ENCODE measurements at regions of chr14 and their contacts with region 1.

Region 1: GRCh38 chr14:35121887-35122695 is at the starts of genes PPP2R3C and PRORP:
- DNase-seq: peak; percentile 78 to 96 (median 88)
- ATAC-seq: peak; percentile 83
- H3K4me3 ChIP-seq: peak within 1 kb of the TSS; percentile 71 to 90
- H3K4me3 Mint-ChIP-seq: peak within 1 kb of the TSS; percentile 99
- H3K27ac ChIP-seq: peak within 1 kb of the TSS; percentile 96 to 97
- H3K27ac Mint-ChIP-seq: peak within 1 kb of the TSS; percentile 100
- H3K4me1 ChIP-seq: peaks cover 33% of the 10 kb centered on the region
- H3K4me1 Mint-ChIP-seq: peaks cover 66% of the 10 kb centered on the region
- H3K27me3 ChIP-seq: no peaks in the 10 kb centered on the region
- H3K27me3 Mint-ChIP-seq: no peaks in the 10 kb centered on the region
- CTCF ChIP-seq: no peak
- total RNA-seq, gene PPP2R3C: 44.2 to 51.4 TPM
- total RNA-seq, gene PRORP: 16.5 to 21.9 TPM

Region 2: GRCh38 chr14:34539407-34540180 is 582.5 kb before region 1 on chr14 and contains the start of gene EAPP:
- CTCF ChIA-PET with region 1: no interaction called
- POLR2A ChIA-PET with region 1: no interaction called
- intact Hi-C with region 1: loop called (anchors 5 kb)
- DNase-seq: peak; percentile 88 to 97 (median 95)
- ATAC-seq: peak; percentile 98
- H3K4me3 ChIP-seq: peak within 1 kb of the TSS; percentile 94 to 95
- H3K4me3 Mint-ChIP-seq: peak within 1 kb of the TSS; percentile 97
- H3K27ac ChIP-seq: peak within 1 kb of the TSS; percentile 96 to 97
- H3K27ac Mint-ChIP-seq: peak within 1 kb of the TSS; percentile 98
- H3K4me1 ChIP-seq: peaks cover 16% of the 10 kb centered on the region
- H3K4me1 Mint-ChIP-seq: peaks cover 34% of the 10 kb centered on the region
- H3K27me3 ChIP-seq: no peaks in the 10 kb centered on the region
- H3K27me3 Mint-ChIP-seq: no peaks in the 10 kb centered on the region
- CTCF ChIP-seq: no peak
- total RNA-seq, gene EAPP: 91.0 to 91.4 TPM

Region 3: DNA sequence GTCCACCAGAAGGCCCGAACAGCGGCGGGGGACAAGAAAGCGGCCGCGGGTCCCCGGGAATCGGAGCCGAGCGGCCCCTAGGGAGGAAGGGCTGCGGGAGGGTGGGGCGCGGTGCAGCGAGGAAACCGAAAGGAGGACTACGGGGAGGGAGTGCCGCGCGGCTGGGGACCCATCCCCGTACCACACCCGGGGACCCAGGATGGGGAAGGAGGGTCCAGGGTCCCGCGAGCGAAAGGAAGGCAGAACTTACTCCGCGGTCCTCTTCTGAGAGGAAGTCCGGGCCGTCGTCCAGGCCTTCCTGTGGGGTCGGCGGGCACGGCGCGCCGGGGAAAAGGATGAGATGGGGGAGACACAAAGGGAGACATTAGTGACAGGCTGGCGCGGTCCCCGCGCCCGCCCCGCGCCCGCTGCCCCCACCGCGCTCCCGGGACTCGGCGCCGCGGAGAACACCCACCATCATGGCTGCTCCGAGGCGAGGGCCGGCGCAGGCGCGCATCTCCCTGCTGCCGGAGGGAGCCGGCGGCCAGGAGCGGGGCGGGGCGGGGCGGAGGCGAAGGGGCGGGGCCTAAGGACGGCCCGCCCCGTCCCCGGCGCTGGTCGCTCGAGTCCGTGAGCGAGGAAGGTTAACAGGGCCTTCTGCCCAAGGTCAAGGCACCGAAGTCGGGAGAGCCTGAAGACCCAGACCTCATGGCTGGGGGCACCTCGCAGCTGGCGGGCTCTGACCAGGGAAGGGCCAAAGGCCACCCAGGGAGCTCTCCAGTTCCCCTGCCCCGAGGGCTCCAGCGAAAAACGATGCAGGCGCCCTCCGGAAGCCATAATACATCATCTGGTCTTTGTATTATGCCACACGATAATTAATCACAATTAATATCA is 492.2 kb before region 1 on chr14 and contains the start of gene SNX6:
- CTCF ChIA-PET with region 1: no interaction called
- POLR2A ChIA-PET with region 1: interaction called, 5 read pairs
- intact Hi-C with region 1: loop called in 1 of 2 experiments (anchors 5 kb)
- DNase-seq: peak; percentile 70 to 92 (median 83)
- ATAC-seq: peak; percentile 96
- H3K4me3 ChIP-seq: peak within 1 kb of the TSS; percentile 95 to 100
- H3K4me3 Mint-ChIP-seq: peak within 1 kb of the TSS; percentile 94
- H3K27ac ChIP-seq: peak within 1 kb of the TSS; percentile 91 to 96
- H3K27ac Mint-ChIP-seq: peak within 1 kb of the TSS; percentile 93
- H3K4me1 ChIP-seq: peaks cover 20% of the 10 kb centered on the region
- H3K4me1 Mint-ChIP-seq: peaks cover 37% of the 10 kb centered on the region
- H3K27me3 ChIP-seq: no peaks in the 10 kb centered on the region
- H3K27me3 Mint-ChIP-seq: peaks cover 4% of the 10 kb centered on the region
- CTCF ChIP-seq: no peak
- total RNA-seq, gene SNX6: 51.2 to 53.5 TPM

Region 4: DNA sequence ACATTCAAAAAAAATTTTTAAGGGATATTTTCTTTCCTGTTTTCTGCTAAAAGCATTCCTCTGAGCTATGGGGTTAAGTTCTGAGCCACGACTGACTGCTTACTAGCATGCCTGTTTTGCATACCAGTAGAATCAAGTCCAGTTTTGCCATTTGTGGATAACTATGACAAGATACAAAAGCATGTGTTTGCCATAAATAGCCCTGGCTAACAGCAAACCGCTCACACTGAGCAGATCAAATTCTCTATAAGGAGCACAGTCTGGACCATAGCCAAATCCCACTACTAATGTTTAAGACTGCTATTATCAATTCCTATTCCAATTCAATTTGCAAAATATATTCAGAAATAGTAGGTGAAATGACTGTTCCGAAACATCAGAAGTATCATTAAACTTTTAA is 410.9 kb before region 1 on chr14:
- CTCF ChIA-PET with region 1: no interaction called
- POLR2A ChIA-PET with region 1: no interaction called
- intact Hi-C with region 1: no loop called
- DNase-seq: no peak
- ATAC-seq: no peak
- H3K4me3 ChIP-seq: no peak overlapping the region
- H3K4me3 Mint-ChIP-seq: no peak overlapping the region
- H3K27ac ChIP-seq: no peak overlapping the region
- H3K27ac Mint-ChIP-seq: no peak overlapping the region
- H3K4me1 ChIP-seq: peaks cover 13% of the 10 kb centered on the region
- H3K4me1 Mint-ChIP-seq: peaks cover 32% of the 10 kb centered on the region
- H3K27me3 ChIP-seq: no peaks in the 10 kb centered on the region
- H3K27me3 Mint-ChIP-seq: no peaks in the 10 kb centered on the region
- CTCF ChIP-seq: no peak

Region 5: DNA sequence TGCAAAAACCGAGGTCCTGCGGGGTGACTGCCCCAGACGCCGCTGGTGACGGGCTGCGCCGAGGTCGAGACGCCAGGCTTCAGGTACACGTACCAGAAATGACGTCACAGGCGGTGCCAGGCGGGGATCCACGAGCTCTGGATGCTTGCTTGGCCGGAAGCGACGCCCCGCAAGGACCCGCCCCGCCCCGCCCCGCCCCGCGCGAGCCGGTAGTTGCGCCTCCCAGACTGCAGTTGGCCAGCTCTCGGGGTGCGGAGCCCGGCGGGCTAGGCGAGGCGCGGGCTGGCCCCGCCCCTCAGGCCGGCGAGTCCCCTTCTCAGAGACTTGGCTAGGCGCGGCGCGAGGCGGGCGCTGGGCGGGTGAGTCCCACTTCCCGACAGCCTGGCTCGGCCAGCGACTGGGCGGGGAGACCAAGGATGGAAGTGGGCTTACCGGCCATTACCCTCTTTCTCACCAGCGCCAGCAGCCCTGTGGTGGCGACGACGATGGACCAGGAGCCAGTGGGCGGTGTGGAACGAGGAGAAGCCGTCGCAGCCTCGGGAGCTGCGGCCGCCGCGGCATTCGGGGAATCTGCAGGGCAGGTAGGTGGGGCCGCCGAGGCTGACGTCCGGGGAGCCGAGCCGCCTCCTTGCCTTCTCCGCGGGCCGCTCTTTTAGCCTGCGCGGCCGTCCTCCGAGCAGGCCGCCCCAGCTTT is 75.9 kb before region 1 on chr14 and contains the start of gene FAM177A1:
- CTCF ChIA-PET with region 1: no interaction called
- POLR2A ChIA-PET with region 1: interaction called, 32 read pairs
- intact Hi-C with region 1: loop called (anchors 1 kb)
- DNase-seq: peak; percentile 97 to 100 (median 99)
- ATAC-seq: peak; percentile 83
- H3K4me3 ChIP-seq: peak within 1 kb of the TSS; percentile 81 to 96
- H3K4me3 Mint-ChIP-seq: peak within 1 kb of the TSS; percentile 82
- H3K27ac ChIP-seq: peak within 1 kb of the TSS; percentile 96 to 100
- H3K27ac Mint-ChIP-seq: peak within 1 kb of the TSS; percentile 98
- H3K4me1 ChIP-seq: peaks cover 20% of the 10 kb centered on the region
- H3K4me1 Mint-ChIP-seq: peaks cover 28% of the 10 kb centered on the region
- H3K27me3 ChIP-seq: no peaks in the 10 kb centered on the region
- H3K27me3 Mint-ChIP-seq: no peaks in the 10 kb centered on the region
- CTCF ChIP-seq: no peak
- total RNA-seq, gene FAM177A1: 227 to 230 TPM

Region 6: DNA sequence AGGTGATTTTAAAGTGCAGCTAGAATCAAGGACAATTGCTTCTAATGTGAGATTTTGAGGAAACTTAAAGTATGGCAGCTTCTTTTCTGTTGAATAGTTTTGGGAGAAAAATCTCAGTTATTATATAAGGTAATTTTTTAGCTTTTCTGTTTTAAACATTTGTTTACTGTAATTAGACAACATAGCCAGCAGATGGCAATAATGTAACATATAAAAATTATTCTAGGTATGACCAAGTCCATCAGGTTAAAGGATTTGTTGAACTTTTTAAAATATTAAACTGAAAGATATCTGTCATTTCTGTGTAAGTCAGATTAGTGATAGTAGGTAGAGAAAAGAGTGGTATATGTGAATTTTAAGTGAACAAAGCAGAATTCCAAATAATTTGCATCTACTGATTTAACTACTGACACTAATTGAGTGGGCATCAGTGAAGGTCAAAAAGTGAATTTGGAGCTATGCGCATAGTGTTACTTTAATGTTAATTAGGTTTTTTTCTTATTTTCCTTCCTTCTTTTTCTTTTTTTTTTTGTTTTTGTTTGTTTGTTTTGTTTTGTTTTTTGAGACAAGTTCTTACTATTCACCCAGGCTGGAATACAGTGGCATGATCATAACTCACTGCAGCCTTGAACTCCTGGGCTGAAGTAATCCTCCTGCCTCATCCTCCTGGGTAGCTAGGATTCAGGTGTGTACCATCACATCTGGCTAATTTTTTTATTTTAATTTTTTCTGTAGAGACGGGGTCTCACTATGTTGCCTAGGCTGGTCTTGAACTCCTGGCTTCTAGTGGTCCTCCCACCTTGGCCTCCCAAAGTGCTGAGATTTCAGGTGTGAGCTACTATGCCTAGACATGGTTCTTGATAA is 18.9 kb after region 1 on chr14:
- CTCF ChIA-PET with region 1: interaction called, 18 read pairs
- POLR2A ChIA-PET with region 1: interaction called, 3 read pairs
- intact Hi-C with region 1: loop called in 1 of 2 experiments (anchors 1 kb)
- DNase-seq: peak in 2 of 9 experiments; percentile 40 to 44
- ATAC-seq: peak; percentile 67
- H3K4me3 ChIP-seq: no peak overlapping the region
- H3K4me3 Mint-ChIP-seq: no peak overlapping the region
- H3K27ac ChIP-seq: no peak overlapping the region
- H3K27ac Mint-ChIP-seq: peak overlapping the region; percentile 67
- H3K4me1 ChIP-seq: no peaks in the 10 kb centered on the region
- H3K4me1 Mint-ChIP-seq: peaks cover 19% of the 10 kb centered on the region
- H3K27me3 ChIP-seq: no peaks in the 10 kb centered on the region
- H3K27me3 Mint-ChIP-seq: no peaks in the 10 kb centered on the region
- CTCF ChIP-seq: peak; percentile 83

Region 7: DNA sequence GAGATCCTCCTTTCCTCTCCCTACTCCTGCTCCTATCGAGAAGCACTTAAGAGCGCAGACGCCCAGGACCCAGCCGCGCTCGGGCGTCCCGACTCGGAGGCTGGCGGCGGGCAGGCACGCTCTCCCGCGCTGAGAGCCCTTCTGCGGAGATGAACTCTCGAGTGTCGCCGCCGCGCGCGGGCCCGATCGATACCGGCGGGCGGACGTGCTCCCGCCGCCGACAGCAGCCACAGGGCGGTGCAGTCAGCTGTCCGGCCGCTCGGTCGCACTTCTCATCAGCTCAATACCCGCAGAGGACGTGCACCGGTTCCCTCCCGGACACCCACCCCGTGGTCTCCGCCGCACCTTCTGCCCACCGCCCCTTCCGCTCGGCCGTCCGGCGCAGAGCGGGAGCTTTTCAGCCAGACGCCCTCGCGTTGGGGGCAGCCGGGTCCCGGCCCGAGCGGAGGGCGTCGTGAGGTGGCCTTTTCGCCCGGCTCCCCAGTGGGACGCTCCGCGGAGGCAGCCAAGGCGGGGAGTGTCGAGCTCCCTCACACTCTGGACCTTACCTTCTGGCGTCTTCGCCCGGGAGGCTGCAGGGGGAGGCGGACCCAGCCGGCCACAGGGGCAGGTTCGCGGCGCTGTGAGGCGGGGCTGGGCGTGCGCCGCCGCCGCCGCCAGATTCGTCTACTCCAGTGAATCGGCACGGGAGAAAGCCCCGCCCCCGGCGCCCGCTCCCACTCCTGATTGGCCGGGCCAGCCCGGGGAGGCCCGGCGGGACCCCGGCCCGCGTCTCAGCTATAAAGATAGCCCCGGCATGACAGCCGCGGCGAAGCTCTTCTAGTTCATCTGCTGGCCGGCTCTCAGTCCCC is 411.5 kb after region 1 on chr14 and contains the start of gene INSM2:
- CTCF ChIA-PET with region 1: no interaction called
- POLR2A ChIA-PET with region 1: no interaction called
- intact Hi-C with region 1: loop called (anchors 10 kb)
- DNase-seq: peak in 7 of 9 experiments; percentile 31 to 54 (median 51)
- ATAC-seq: peak; percentile 39
- H3K4me3 ChIP-seq: peak within 1 kb of the TSS; percentile 53 to 54
- H3K4me3 Mint-ChIP-seq: peak within 1 kb of the TSS; percentile 81
- H3K27ac ChIP-seq: no peak within 1 kb of the TSS
- H3K27ac Mint-ChIP-seq: no peak within 1 kb of the TSS
- H3K4me1 ChIP-seq: peaks cover 19% of the 10 kb centered on the region
- H3K4me1 Mint-ChIP-seq: peaks cover 16% of the 10 kb centered on the region
- H3K27me3 ChIP-seq: peaks cover 16 to 35% of the 10 kb centered on the region in 2 experiments
- H3K27me3 Mint-ChIP-seq: peaks cover 41% of the 10 kb centered on the region
- CTCF ChIP-seq: no peak
- total RNA-seq, gene INSM2: not detected

Region 8: GRCh38 chr14:35814371-35815005 is 692.4 kb after region 1 on chr14:
- CTCF ChIA-PET with region 1: no interaction called
- POLR2A ChIA-PET with region 1: no interaction called
- intact Hi-C with region 1: loop called in 1 of 2 experiments (anchors 5 kb)
- DNase-seq: peak; percentile 56 to 92 (median 83)
- ATAC-seq: peak; percentile 93
- H3K4me3 ChIP-seq: no peak overlapping the region
- H3K4me3 Mint-ChIP-seq: no peak overlapping the region
- H3K27ac ChIP-seq: no peak overlapping the region
- H3K27ac Mint-ChIP-seq: no peak overlapping the region
- H3K4me1 ChIP-seq: no peaks in the 10 kb centered on the region
- H3K4me1 Mint-ChIP-seq: peaks cover 5% of the 10 kb centered on the region
- H3K27me3 ChIP-seq: no peaks in the 10 kb centered on the region
- H3K27me3 Mint-ChIP-seq: no peaks in the 10 kb centered on the region
- CTCF ChIP-seq: peak; percentile 57